ENCODE measurements at regions of chr17 and their contacts with region 1.

Region 1: DNA sequence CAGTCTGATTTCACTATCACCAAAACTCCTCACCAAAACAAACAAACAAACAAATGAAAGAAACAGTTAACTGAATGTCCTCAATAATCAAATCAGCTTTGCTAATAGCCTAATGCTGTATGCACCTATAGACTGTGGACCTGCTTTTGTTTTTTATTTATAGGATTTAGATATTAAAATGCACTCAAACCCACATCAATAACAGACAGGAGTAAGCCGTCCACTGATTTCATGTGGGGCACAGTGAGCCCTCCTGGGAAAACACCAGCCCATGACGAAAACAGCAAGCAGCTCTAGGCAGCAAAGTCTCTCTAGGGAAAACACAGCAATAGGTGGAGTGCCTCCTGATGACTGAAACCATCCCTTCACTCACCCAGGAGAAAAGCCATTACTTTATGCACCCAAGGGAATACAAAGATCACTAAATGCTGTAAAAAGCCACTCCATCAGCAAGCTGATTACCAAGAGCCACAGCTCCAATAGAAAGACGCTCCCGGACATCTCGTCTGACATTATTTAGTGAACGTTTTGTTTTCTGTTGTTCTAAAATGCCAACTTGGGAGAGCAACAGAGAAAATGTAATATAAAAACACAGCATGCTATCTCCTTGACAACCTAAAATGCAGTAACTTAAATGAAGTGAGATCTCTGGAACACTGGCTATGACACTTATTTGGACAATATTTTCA is 47.8 kb downstream of the ANKFY1 start:
- DNase-seq: no peak
- H3K4me3 ChIP-seq: no peak overlapping the region
- H3K27ac ChIP-seq: no peak overlapping the region
- H3K4me1 ChIP-seq: no peaks in the 10 kb centered on the region
- H3K27me3 ChIP-seq: no peaks in the 10 kb centered on the region
- CTCF ChIP-seq: no peak
- POLR2A ChIP-seq: no peak

Region 2: GRCh38 chr17:4175921-4176807 is 39.9 kb before region 1 on chr17:
- CTCF ChIA-PET with region 1: no interaction called
- POLR2A ChIA-PET with region 1: no interaction called
- dilution Hi-C with region 1: no loop called
- intact Hi-C with region 1: no loop called
- DNase-seq: no peak
- H3K4me3 ChIP-seq: no peak overlapping the region
- H3K27ac ChIP-seq: no peak overlapping the region
- H3K4me1 ChIP-seq: no peaks in the 10 kb centered on the region
- H3K27me3 ChIP-seq: no peaks in the 10 kb centered on the region
- CTCF ChIP-seq: no peak
- POLR2A ChIP-seq: no peak

Region 3: DNA sequence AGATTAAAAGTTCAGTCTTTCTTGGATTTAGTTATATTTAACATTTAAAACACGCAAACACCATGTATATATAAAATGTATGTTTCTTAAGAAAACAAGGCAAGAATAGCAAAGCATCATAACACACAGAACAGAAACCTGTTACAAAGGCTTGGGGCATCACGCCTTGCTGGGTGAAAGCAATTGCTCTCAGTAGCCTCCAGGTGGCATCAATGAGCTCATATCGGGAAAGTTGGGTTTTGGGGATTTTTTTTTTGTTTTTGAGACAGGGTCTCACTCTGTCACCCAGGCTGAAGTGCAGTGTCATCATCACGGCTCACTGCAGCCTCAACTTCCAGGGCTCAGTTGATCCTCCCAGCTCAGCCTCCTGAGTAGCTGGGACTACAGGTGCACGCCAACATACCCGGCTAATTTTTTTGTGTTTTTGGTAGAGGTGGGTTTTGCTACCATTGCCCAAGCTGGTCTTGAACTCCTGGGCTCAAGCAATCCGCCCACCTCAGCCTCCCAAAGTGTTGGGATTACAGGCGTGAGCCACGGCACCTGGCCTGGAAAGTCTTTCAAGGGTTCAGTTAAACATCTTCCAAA is 16.1 kb before region 1 on chr17:
- CTCF ChIA-PET with region 1: interaction called, 33 read pairs
- POLR2A ChIA-PET with region 1: no interaction called
- dilution Hi-C with region 1: no loop called
- intact Hi-C with region 1: loop called (anchors 1 kb)
- DNase-seq: peak; percentile 45
- H3K4me3 ChIP-seq: no peak overlapping the region
- H3K27ac ChIP-seq: no peak overlapping the region
- H3K4me1 ChIP-seq: no peaks in the 10 kb centered on the region
- H3K27me3 ChIP-seq: no peaks in the 10 kb centered on the region
- CTCF ChIP-seq: peak; percentile 69 to 70
- POLR2A ChIP-seq: no peak

Region 4: GRCh38 chr17:4249452-4250029 is 33.5 kb after region 1 on chr17:
- CTCF ChIA-PET with region 1: interaction called, 54 read pairs
- POLR2A ChIA-PET with region 1: no interaction called
- dilution Hi-C with region 1: no loop called
- intact Hi-C with region 1: loop called (anchors 1 kb)
- DNase-seq: peak; percentile 26
- H3K4me3 ChIP-seq: no peak overlapping the region
- H3K27ac ChIP-seq: no peak overlapping the region
- H3K4me1 ChIP-seq: no peaks in the 10 kb centered on the region
- H3K27me3 ChIP-seq: no peaks in the 10 kb centered on the region
- CTCF ChIP-seq: peak; percentile 36 to 53
- POLR2A ChIP-seq: no peak

Region 5: GRCh38 chr17:4304417-4305027 is 88.5 kb after region 1 on chr17:
- CTCF ChIA-PET with region 1: interaction called, 29 read pairs
- POLR2A ChIA-PET with region 1: no interaction called
- dilution Hi-C with region 1: no loop called
- intact Hi-C with region 1: loop called (anchors 1 kb)
- DNase-seq: peak; percentile 51
- H3K4me3 ChIP-seq: no peak overlapping the region
- H3K27ac ChIP-seq: no peak overlapping the region
- H3K4me1 ChIP-seq: no peaks in the 10 kb centered on the region
- H3K27me3 ChIP-seq: no peaks in the 10 kb centered on the region
- CTCF ChIP-seq: peak; percentile 54 to 69
- POLR2A ChIP-seq: no peak

Region 6: GRCh38 chr17:4407851-4408250 is 191.8 kb after region 1 on chr17:
- CTCF ChIA-PET with region 1: interaction called, 152 read pairs
- POLR2A ChIA-PET with region 1: no interaction called
- dilution Hi-C with region 1: no loop called
- intact Hi-C with region 1: loop called (anchors 1 kb)
- DNase-seq: no peak
- H3K4me3 ChIP-seq: no peak overlapping the region
- H3K27ac ChIP-seq: no peak overlapping the region
- H3K4me1 ChIP-seq: no peaks in the 10 kb centered on the region
- H3K27me3 ChIP-seq: no peaks in the 10 kb centered on the region
- CTCF ChIP-seq: no peak
- POLR2A ChIP-seq: no peak

Region 7: DNA sequence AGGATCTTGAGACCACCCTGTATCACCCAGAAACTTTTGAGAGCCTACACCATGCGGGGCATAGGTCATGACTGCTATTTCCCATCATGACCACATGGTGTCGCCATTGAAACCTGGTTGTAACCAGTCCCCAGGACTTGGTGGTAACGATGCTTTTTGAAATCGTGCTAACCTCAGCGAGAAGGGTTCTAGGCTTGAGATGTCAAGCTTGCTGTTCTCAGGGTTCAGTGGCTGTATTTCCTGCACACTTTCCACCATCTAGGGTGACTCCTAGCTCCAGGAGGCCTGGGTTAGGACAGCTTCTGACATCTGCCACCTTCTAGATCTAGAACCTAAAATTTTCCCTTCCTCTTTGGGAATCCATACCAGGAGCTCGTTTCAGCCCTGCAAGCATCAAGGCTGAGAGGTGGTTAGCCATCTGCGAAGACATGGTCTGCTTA is 204.7 kb after region 1 on chr17:
- CTCF ChIA-PET with region 1: interaction called, 152 read pairs
- POLR2A ChIA-PET with region 1: interaction called, 3 read pairs
- dilution Hi-C with region 1: no loop called
- intact Hi-C with region 1: no loop called
- DNase-seq: peak; percentile 70
- H3K4me3 ChIP-seq: no peak overlapping the region
- H3K27ac ChIP-seq: no peak overlapping the region
- H3K4me1 ChIP-seq: no peaks in the 10 kb centered on the region
- H3K27me3 ChIP-seq: no peaks in the 10 kb centered on the region
- CTCF ChIP-seq: peak; percentile 81 to 82
- POLR2A ChIP-seq: no peak

Measured in endothelial cell of umbilical vein (primary cell).